AG04450 (cell line): ENCODE measurements at regions of chr7 and their contacts with region 1.

Region 1: GRCh38 chr7:47501406-47501805 is 80.5 kb downstream of the TNS3 start:
- DNase-seq: peak; percentile 79
- H3K4me3 ChIP-seq: 0 out of 2 replicates have a peak overlapping the region, but pooled peaks have one; percentile 32
- H3K27ac ChIP-seq: peak overlapping the region; percentile 84
- H3K27me3 ChIP-seq: no peaks in the 10 kb centered on the region
- CTCF ChIP-seq: no peak

Region 2: GRCh38 chr7:47482013-47482875 is 19.2 kb before region 1 on chr7:
- CTCF ChIA-PET with region 1: no interaction called
- POLR2A ChIA-PET with region 1: interaction called, 24 read pairs
- DNase-seq: peak; percentile 89
- H3K4me3 ChIP-seq: peak overlapping the region; percentile 17; the same call in 1 of the 2 replicates
- H3K27ac ChIP-seq: peak overlapping the region; percentile 99
- H3K27me3 ChIP-seq: no peaks in the 10 kb centered on the region
- CTCF ChIP-seq: no peak

Region 3: DNA sequence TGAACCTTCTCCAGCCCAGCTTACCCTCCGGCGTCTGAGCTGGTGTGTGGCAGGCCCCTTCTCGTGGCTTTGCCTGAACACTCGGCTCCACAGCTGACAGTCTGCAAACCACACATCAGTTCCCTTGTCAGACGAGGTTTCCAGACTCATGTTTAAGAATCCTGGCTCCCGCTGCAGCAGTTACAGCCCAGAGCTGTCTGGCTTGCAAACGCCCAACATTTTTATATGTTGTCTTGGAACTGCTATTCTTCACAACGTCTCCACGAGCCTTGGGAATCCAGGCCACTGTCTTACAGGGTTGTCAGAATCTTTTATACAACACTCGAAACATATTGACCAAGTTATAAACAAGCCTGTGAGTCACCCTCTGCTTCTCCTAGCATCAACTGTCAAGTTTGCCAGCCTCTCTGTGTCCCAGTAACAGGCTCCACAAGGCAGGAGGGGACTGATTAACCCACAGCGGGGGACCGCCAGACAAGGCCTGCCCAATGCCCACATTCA is 12.4 kb after region 1 on chr7:
- CTCF ChIA-PET with region 1: no interaction called
- POLR2A ChIA-PET with region 1: interaction called, 14 read pairs
- DNase-seq: peak; percentile 94
- H3K4me3 ChIP-seq: peak overlapping the region; percentile 21; the same call in 1 of the 2 replicates
- H3K27ac ChIP-seq: peak overlapping the region; percentile 73
- H3K27me3 ChIP-seq: no peaks in the 10 kb centered on the region
- CTCF ChIP-seq: no peak

Region 4: DNA sequence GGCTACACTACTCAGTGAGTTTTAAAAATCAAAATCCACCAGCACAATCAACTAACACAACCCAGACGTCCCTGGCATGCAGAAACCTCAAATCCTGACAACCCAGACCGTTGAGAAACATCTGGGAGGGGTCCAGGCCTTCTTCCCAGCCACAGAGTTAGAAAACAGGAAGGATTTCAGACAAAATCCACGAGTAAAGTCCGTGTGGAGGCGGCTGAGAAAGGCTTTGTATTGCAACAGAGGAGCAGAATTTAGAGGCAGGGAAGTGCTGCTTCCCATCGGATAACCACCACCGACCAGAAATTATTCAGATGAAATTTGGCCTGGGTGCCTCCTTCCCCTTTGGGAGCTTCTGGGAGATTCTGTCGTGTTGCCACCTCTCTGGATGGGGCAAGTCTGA is 19.0 kb after region 1 on chr7:
- CTCF ChIA-PET with region 1: no interaction called
- POLR2A ChIA-PET with region 1: interaction called, 10 read pairs
- DNase-seq: peak; percentile 55
- H3K4me3 ChIP-seq: no peak overlapping the region
- H3K27ac ChIP-seq: peak overlapping the region; percentile 67
- H3K27me3 ChIP-seq: no peaks in the 10 kb centered on the region
- CTCF ChIP-seq: no peak